ENCODE measurements at regions of chr7 and their contacts with region 1.

Region 1: GRCh38 chr7:113247198-113247597 is 128.8 kb upstream of the SMIM30 start:
- DNase-seq: no peak
- H3K4me3 ChIP-seq: no peak overlapping the region
- H3K27ac ChIP-seq: no peak overlapping the region
- H3K4me1 ChIP-seq: no peaks in the 10 kb centered on the region
- H3K27me3 ChIP-seq: no peaks in the 10 kb centered on the region
- CTCF ChIP-seq: no peak
- EP300 ChIP-seq: no peak
- POLR2A ChIP-seq: no peak

Region 2: GRCh38 chr7:111841596-111842205 is 1405.5 kb before region 1 on chr7:
- in situ Hi-C with region 1: no loop called
- intact Hi-C with region 1: loop called (anchors 5 kb)
- DNase-seq: no peak
- H3K4me3 ChIP-seq: no peak overlapping the region
- H3K27ac ChIP-seq: peak overlapping the region in 3 of 4 donors; percentile 20 to 38 (median 22)
- H3K4me1 ChIP-seq: peaks cover 0 to 21% (median 4%) of the 10 kb centered on the region in 4 donors
- H3K27me3 ChIP-seq: no peaks in the 10 kb centered on the region
- CTCF ChIP-seq: no peak
- EP300 ChIP-seq: no peak
- POLR2A ChIP-seq: no peak

Measured in transverse colon (tissue), 4 donors.